Endothelial cell of umbilical vein (primary cell): ENCODE measurements at regions of chr4 and their contacts with region 1.

Region 1: DNA sequence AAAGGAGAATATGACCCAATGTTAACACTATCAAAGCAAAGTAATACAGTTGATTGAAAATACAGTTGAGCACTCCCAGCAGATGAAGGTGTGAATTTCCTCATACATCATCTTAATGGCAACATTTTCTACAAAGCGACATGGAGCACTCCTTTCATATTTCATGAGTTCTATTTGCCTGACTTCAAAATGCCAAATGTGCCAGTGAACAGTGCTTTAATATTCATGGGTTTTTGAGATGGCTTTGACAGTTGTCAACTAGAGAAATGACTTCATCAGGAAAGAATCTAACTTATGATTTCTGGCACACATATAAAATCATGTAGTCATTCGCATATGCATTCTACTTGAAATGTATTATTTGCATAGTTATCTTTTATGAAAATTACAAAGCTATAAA is 222.4 kb downstream of the GALNTL6 start:
- DNase-seq: peak; percentile 1
- H3K4me3 ChIP-seq: no peak overlapping the region
- H3K27ac ChIP-seq: no peak overlapping the region
- H3K4me1 ChIP-seq: no peaks in the 10 kb centered on the region
- H3K27me3 ChIP-seq: no peaks in the 10 kb centered on the region
- CTCF ChIP-seq: no peak
- POLR2A ChIP-seq: no peak

Region 2: GRCh38 chr4:171846232-171846631 is 189.3 kb before region 1 on chr4:
- CTCF ChIA-PET with region 1: interaction called, 7 read pairs
- POLR2A ChIA-PET with region 1: no interaction called
- dilution Hi-C with region 1: no loop called
- intact Hi-C with region 1: loop called (anchors 1 kb)
- DNase-seq: peak; percentile 55
- H3K4me3 ChIP-seq: no peak overlapping the region
- H3K27ac ChIP-seq: no peak overlapping the region
- H3K4me1 ChIP-seq: no peaks in the 10 kb centered on the region
- H3K27me3 ChIP-seq: no peaks in the 10 kb centered on the region
- CTCF ChIP-seq: peak; percentile 65 to 68
- POLR2A ChIP-seq: no peak

Region 3: DNA sequence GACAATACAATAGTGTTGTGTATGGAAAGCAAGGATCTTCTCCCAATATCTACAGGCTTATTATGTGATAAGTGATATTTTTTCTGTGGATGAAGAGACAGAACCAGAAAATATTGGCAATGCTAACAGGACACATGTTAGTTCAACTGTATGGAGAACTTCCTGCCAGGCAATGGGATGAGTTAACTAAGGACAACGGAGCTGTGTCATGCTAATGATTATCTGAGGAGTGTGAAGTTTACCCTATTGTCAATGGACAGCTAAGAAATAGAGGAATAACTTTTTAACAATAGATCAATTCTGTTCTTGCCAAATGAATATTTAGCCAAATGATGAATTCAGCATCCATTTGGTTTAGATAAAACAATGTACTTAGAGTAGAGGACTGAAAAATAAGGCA is 42.3 kb before region 1 on chr4:
- CTCF ChIA-PET with region 1: no interaction called
- POLR2A ChIA-PET with region 1: no interaction called
- dilution Hi-C with region 1: no loop called
- intact Hi-C with region 1: no loop called
- DNase-seq: no peak
- H3K4me3 ChIP-seq: no peak overlapping the region
- H3K27ac ChIP-seq: no peak overlapping the region
- H3K4me1 ChIP-seq: no peaks in the 10 kb centered on the region
- H3K27me3 ChIP-seq: no peaks in the 10 kb centered on the region
- CTCF ChIP-seq: no peak
- POLR2A ChIP-seq: no peak

Region 4: DNA sequence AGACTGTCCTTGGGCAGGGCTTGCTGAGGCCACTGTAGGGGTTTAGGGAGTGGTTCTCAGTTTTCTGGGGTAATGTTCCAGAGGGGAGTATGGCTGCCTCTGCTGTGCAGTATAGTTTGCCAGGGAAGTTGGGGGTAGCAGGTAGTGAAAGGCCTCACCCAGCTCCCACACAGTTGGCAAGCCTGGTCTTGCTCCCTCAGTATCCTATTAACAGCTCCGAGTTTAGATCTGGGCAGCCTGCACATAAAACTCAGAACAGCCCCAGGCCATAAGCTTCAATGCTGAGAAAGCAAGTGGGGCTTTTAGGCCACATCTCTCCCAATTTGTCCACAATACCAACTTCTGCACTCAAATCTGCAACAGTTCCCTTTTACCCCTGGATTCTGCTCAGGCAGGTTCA is 17.2 kb before region 1 on chr4:
- CTCF ChIA-PET with region 1: no interaction called
- POLR2A ChIA-PET with region 1: no interaction called
- dilution Hi-C with region 1: no loop called
- intact Hi-C with region 1: no loop called
- DNase-seq: no peak
- H3K4me3 ChIP-seq: no peak overlapping the region
- H3K27ac ChIP-seq: no peak overlapping the region
- H3K4me1 ChIP-seq: no peaks in the 10 kb centered on the region
- H3K27me3 ChIP-seq: no peaks in the 10 kb centered on the region
- CTCF ChIP-seq: no peak
- POLR2A ChIP-seq: no peak